Activated T-helper 1 cell treated with anti-CD3 and anti-CD28 coated beads, Interleukin-12 subunit alpha, Interleukin-12 subunit beta, Interleukin-2, Interleukin-4 antibody, amounts not matched to agents 30 ng/mL and 10 ng/mL and 1 ng/mL, durations not matched to agents 14 hours and 24 hours and 36 hours (primary cell): ENCODE measurements at regions of chr3 and their contacts with region 1.

Region 1: GRCh38 chr3:150721285-150722130 is 17.8 kb upstream of the ERICH6 start:
- DNase-seq: no peak
- H3K4me3 Mint-ChIP-seq: no peak overlapping the region
- H3K27ac Mint-ChIP-seq: no peak overlapping the region
- H3K4me1 Mint-ChIP-seq: peaks cover 46% of the 10 kb centered on the region
- H3K27me3 Mint-ChIP-seq: no peaks in the 10 kb centered on the region

Region 2: GRCh38 chr3:150528354-150528797 is 193.1 kb before region 1 on chr3:
- intact Hi-C with region 1: loop called (anchors 2 kb)
- DNase-seq: no peak
- H3K4me3 Mint-ChIP-seq: no peak overlapping the region
- H3K27ac Mint-ChIP-seq: no peak overlapping the region
- H3K4me1 Mint-ChIP-seq: peaks cover 7% of the 10 kb centered on the region
- H3K27me3 Mint-ChIP-seq: peaks cover 17% of the 10 kb centered on the region

Region 3: DNA sequence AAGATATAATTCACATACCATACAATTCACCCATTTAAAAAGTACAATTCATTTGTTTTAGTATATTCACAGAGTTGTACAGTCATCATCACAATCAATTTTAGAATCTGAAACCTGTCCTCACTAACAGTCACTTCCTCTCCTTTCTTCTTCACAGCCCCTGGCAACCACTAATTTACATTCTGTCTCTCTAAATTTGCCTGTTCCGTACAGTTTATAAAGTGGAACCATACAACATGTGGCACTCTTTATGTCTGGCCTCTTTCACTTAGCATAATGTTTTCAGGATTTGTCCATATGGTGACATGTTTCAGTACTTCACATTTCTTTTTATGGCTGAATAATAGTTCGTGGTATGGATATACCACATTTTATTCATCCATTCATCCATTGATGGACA is 40.5 kb before region 1 on chr3:
- intact Hi-C with region 1: no loop called
- DNase-seq: no peak
- H3K4me3 Mint-ChIP-seq: no peak overlapping the region
- H3K27ac Mint-ChIP-seq: peak overlapping the region; percentile 7
- H3K4me1 Mint-ChIP-seq: peaks cover 24% of the 10 kb centered on the region
- H3K27me3 Mint-ChIP-seq: peaks cover 4% of the 10 kb centered on the region

Region 4: GRCh38 chr3:150703299-150704134 is 18.0 kb before region 1 on chr3 and contains the start of gene ERICH6:
- intact Hi-C with region 1: loop called (anchors 1 kb)
- DNase-seq: peak; percentile 81
- H3K4me3 Mint-ChIP-seq: peak within 1 kb of the TSS; percentile 93
- H3K27ac Mint-ChIP-seq: peak within 1 kb of the TSS; percentile 99
- H3K4me1 Mint-ChIP-seq: peaks cover 23% of the 10 kb centered on the region
- H3K27me3 Mint-ChIP-seq: no peaks in the 10 kb centered on the region
- total RNA-seq, gene ERICH6: not detected in 2 replicates

Region 5: DNA sequence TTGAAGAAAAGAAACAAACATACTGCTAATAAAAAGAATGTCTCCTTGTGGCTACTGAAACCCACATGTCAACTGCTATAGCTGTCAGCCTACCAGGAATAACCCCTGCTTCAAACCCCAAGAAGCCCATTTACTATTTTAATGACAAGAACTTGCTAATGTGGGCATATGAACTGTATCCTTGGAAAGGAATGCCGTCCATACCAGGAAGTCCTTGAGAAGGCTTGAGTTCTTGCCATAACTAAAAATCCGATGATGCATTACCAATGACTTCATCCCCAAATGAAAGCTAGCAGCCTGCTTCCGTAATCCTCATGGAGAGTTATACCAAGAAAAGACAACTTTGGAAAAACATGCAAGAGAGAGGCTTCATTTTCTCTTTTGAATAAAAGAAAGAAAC is 148.9 kb after region 1 on chr3:
- intact Hi-C with region 1: loop called (anchors 1 kb)
- DNase-seq: no peak
- H3K4me3 Mint-ChIP-seq: no peak overlapping the region
- H3K27ac Mint-ChIP-seq: no peak overlapping the region
- H3K4me1 Mint-ChIP-seq: peaks cover 2% of the 10 kb centered on the region
- H3K27me3 Mint-ChIP-seq: peaks cover 12% of the 10 kb centered on the region

Region 6: DNA sequence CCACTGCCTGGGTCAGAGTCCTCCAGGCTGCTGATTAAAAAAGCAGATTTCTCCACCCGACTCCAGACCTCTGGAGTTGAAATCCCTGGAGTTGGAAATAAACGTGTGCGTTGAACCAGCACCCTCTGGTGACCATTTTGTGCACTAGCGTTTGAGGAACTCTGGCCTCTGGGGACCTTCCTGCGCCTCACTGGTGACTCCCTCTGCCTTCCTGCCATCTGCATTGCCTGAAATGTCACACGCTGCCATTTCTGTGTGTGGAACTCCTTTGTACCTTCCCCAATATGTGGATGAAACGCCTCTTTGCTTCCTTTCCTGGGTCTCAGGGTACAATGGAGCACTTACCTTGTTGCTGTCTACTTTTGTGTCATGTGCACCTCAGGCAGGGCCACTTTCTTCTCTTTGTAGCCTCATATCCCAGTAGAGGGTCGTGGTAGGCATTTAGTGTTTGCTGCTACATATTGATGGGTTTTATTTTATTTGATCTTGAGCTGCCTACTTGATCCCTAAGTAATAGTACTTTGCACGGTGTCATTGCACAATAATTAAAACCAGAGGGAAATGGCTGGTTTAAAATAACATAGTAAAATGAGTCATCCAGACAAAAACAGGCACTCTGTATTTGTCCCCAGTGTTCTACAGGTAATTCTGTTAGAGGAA is 424.7 kb after region 1 on chr3:
- intact Hi-C with region 1: loop called (anchors 1 kb)
- DNase-seq: peak; percentile 38
- H3K4me3 Mint-ChIP-seq: no peak overlapping the region
- H3K27ac Mint-ChIP-seq: no peak overlapping the region
- H3K4me1 Mint-ChIP-seq: no peaks in the 10 kb centered on the region
- H3K27me3 Mint-ChIP-seq: peaks cover 14% of the 10 kb centered on the region